ENCODE measurements at regions of chr3 and their contacts with region 1.

Region 1: GRCh38 chr3:188154014-188154808 is at the start of gene LPP:
- DNase-seq: peak; percentile 53 to 76
- ATAC-seq: peak; percentile 60 to 70
- H3K4me3 ChIP-seq: peak within 1 kb of the TSS; percentile 61 to 96 (median 83)
- H3K27ac ChIP-seq: peak within 1 kb of the TSS; percentile 93 to 98 (median 98)
- H3K4me1 ChIP-seq: peaks cover 44 to 54% of the 10 kb centered on the region in 2 donors
- H3K27me3 ChIP-seq: no peaks in the 10 kb centered on the region
- CTCF ChIP-seq: no peak
- POLR2A ChIP-seq: peak; percentile 78 to 80
- total RNA-seq, gene LPP: 56.0 to 65.7 (median 58.1) TPM

Region 2: DNA sequence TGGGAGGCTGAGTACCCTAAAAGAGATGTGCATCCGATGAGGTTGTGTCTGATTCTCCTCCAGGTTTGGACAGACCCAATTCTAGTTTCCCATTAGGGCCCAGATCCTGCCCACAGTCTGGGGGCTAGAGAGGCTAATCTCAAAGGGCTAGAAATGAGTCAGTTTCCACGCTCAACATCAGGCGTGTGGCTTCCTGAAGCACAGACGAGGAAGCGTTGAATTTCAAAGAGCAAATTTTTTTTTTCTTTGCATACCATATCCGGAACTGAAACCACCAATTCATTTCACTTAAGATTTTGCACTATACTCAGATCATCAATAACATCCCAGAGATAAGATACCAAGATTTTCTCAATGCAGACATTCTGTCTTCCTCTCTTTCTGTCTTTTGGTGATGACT is 235.2 kb before region 1 on chr3:
- in situ Hi-C with region 1: no loop called
- intact Hi-C with region 1: loop called (anchors 10 kb)
- DNase-seq: no peak
- ATAC-seq: no peak
- H3K4me3 ChIP-seq: no peak overlapping the region
- H3K27ac ChIP-seq: peak overlapping the region in 3 of 4 donors; percentile 35 to 80 (median 79)
- H3K4me1 ChIP-seq: peaks cover 33 to 38% of the 10 kb centered on the region in 2 donors
- H3K27me3 ChIP-seq: no peaks in the 10 kb centered on the region
- CTCF ChIP-seq: no peak
- POLR2A ChIP-seq: no peak

Region 3: DNA sequence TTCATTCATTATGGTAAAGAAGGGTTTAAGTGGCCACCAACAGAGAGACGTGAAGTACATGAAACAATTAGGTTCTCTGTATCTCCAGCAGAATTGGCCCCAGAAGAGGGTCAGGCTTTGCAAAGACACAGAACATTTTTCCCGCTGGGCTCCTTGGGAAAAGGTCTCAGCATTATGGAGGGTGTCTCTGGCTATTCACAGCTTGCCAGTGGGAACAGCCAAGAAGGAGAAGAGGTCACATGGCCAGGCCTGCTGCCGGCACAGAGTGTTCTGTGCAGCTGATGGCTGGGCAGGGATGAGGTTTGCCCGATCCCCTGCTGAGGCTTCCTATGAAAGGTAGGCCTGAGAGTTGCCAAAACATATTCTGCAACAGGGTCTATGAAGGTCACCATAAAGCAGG is 78.0 kb before region 1 on chr3:
- in situ Hi-C with region 1: no loop called
- intact Hi-C with region 1: loop called (anchors 2 kb)
- DNase-seq: peak; percentile 44 to 83
- ATAC-seq: peak; percentile 58 to 74
- H3K4me3 ChIP-seq: no peak overlapping the region
- H3K27ac ChIP-seq: peak overlapping the region; percentile 73 to 86 (median 82)
- H3K4me1 ChIP-seq: peaks cover 13 to 27% of the 10 kb centered on the region in 2 donors
- H3K27me3 ChIP-seq: no peaks in the 10 kb centered on the region
- CTCF ChIP-seq: no peak
- POLR2A ChIP-seq: no peak

Region 4: GRCh38 chr3:188092648-188093047 is 61.6 kb before region 1 on chr3:
- in situ Hi-C with region 1: no loop called
- intact Hi-C with region 1: no loop called
- DNase-seq: no peak
- ATAC-seq: peak; percentile 25 to 33
- H3K4me3 ChIP-seq: no peak overlapping the region
- H3K27ac ChIP-seq: no peak overlapping the region
- H3K4me1 ChIP-seq: peaks cover under 1 to 4% of the 10 kb centered on the region in 2 donors
- H3K27me3 ChIP-seq: no peaks in the 10 kb centered on the region
- CTCF ChIP-seq: no peak
- POLR2A ChIP-seq: no peak